CD4-positive, alpha-beta T cell (primary cell): ENCODE measurements at regions of chr17 and their contacts with region 1.

Region 1: DNA sequence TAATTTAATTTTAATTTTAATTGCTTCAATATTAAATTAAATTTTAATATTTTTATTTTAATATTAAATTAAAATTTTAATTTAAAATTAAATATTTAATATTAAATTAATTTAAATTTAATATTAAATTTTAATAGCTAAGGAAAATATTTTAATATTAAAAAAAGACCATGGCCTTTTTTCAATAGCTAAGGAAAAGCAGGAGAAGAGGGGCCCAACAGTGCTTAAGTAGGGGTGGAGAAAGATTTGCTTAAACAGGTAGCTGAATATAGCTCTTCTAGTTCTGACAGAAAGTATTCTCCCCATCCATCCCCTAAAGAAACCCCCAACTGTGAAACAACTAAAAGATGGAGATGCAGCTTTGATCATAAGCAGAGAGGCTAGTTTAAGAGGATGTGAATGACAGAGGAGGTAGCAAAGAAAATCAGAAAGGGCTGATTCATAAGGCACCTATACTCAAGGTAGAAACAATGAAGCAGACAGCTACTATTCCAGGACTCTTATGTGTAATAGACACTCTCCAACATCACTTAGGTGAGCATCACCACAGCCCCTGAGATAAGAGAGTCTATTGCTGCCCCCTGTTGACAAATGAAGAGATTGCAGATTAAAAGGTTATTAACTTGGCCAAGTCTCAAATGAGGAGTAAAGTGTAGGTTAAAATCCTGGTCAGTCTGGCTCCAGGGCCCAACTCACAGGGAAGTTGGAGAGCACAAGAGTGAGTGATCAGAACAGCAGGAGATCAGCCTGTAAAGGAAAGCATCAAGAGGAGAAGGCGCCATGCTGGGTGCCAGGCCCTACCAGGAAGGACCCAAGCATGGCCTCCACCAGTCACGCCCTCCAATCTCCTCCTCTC is 7.8 kb upstream of the RNASEK start:
- DNase-seq: peak in 5 of 14 experiments; percentile 19 to 84 (median 81)
- ATAC-seq: peak; percentile 97
- H3K4me3 ChIP-seq: no peak overlapping the region
- H3K4me3 Mint-ChIP-seq: peak overlapping the region; percentile 70
- H3K27ac ChIP-seq: no peak overlapping the region
- H3K27ac Mint-ChIP-seq: peak overlapping the region; percentile 13
- H3K4me1 ChIP-seq: peaks cover 9% of the 10 kb centered on the region
- H3K4me1 Mint-ChIP-seq: peaks cover 20% of the 10 kb centered on the region
- H3K27me3 ChIP-seq: no peaks in the 10 kb centered on the region
- H3K27me3 Mint-ChIP-seq: no peaks in the 10 kb centered on the region
- CTCF ChIP-seq: peak; percentile 81

Region 2: GRCh38 chr17:6666077-6666521 is 338.5 kb before region 1 on chr17:
- CTCF ChIA-PET with region 1: no interaction called
- POLR2A ChIA-PET with region 1: no interaction called
- intact Hi-C with region 1: loop called in 1 of 2 experiments (anchors 5 kb)
- DNase-seq: peak in 11 of 14 experiments; percentile 19 to 73 (median 27)
- ATAC-seq: peak; percentile 73
- H3K4me3 ChIP-seq: no peak overlapping the region
- H3K4me3 Mint-ChIP-seq: no peak overlapping the region
- H3K27ac ChIP-seq: no peak overlapping the region
- H3K27ac Mint-ChIP-seq: no peak overlapping the region
- H3K4me1 ChIP-seq: peaks cover 4% of the 10 kb centered on the region
- H3K4me1 Mint-ChIP-seq: peaks cover 4% of the 10 kb centered on the region
- H3K27me3 ChIP-seq: no peaks in the 10 kb centered on the region
- H3K27me3 Mint-ChIP-seq: no peaks in the 10 kb centered on the region
- CTCF ChIP-seq: peak; percentile 84

Region 3: GRCh38 chr17:6843241-6843880 is 161.3 kb before region 1 on chr17:
- CTCF ChIA-PET with region 1: no interaction called
- POLR2A ChIA-PET with region 1: no interaction called
- intact Hi-C with region 1: loop called (anchors 1 to 2 kb)
- DNase-seq: peak in 3 of 14 experiments; percentile 45 to 68 (median 68)
- ATAC-seq: no peak
- H3K4me3 ChIP-seq: no peak overlapping the region
- H3K4me3 Mint-ChIP-seq: no peak overlapping the region
- H3K27ac ChIP-seq: no peak overlapping the region
- H3K27ac Mint-ChIP-seq: no peak overlapping the region
- H3K4me1 ChIP-seq: no peaks in the 10 kb centered on the region
- H3K4me1 Mint-ChIP-seq: no peaks in the 10 kb centered on the region
- H3K27me3 ChIP-seq: peaks cover 13 to 24% of the 10 kb centered on the region in 2 experiments
- H3K27me3 Mint-ChIP-seq: peaks cover 55% of the 10 kb centered on the region
- CTCF ChIP-seq: peak; percentile 74

Region 4: GRCh38 chr17:6913608-6914443 is 90.8 kb before region 1 on chr17:
- CTCF ChIA-PET with region 1: interaction called, 43 read pairs
- POLR2A ChIA-PET with region 1: interaction called, 9 read pairs
- intact Hi-C with region 1: loop called (anchors 1 kb)
- DNase-seq: peak; percentile 54 to 83 (median 72)
- ATAC-seq: peak; percentile 86
- H3K4me3 ChIP-seq: peak overlapping the region; percentile 39
- H3K4me3 Mint-ChIP-seq: peak overlapping the region; percentile 81
- H3K27ac ChIP-seq: no peak overlapping the region
- H3K27ac Mint-ChIP-seq: no peak overlapping the region
- H3K4me1 ChIP-seq: peaks cover 11% of the 10 kb centered on the region
- H3K4me1 Mint-ChIP-seq: peaks cover 34% of the 10 kb centered on the region
- H3K27me3 ChIP-seq: peaks cover 0 to 6% of the 10 kb centered on the region in 2 experiments
- H3K27me3 Mint-ChIP-seq: peaks cover 13% of the 10 kb centered on the region
- CTCF ChIP-seq: peak; percentile 87

Region 5: GRCh38 chr17:7021993-7022778 is 17.6 kb after region 1 on chr17:
- CTCF ChIA-PET with region 1: interaction called, 15 read pairs
- POLR2A ChIA-PET with region 1: interaction called, 4 read pairs
- intact Hi-C with region 1: loop called (anchors 1 to 2 kb)
- DNase-seq: peak; percentile 55 to 90 (median 73)
- ATAC-seq: peak; percentile 62
- H3K4me3 ChIP-seq: peak overlapping the region; percentile 44
- H3K4me3 Mint-ChIP-seq: peak overlapping the region; percentile 84
- H3K27ac ChIP-seq: no peak overlapping the region
- H3K27ac Mint-ChIP-seq: peak overlapping the region; percentile 88
- H3K4me1 ChIP-seq: peaks cover 50% of the 10 kb centered on the region
- H3K4me1 Mint-ChIP-seq: peaks cover 48% of the 10 kb centered on the region
- H3K27me3 ChIP-seq: no peaks in the 10 kb centered on the region
- H3K27me3 Mint-ChIP-seq: peaks cover 11% of the 10 kb centered on the region
- CTCF ChIP-seq: peak; percentile 96